ENCODE measurements at regions of chr12 and their contacts with region 1.

Region 1: DNA sequence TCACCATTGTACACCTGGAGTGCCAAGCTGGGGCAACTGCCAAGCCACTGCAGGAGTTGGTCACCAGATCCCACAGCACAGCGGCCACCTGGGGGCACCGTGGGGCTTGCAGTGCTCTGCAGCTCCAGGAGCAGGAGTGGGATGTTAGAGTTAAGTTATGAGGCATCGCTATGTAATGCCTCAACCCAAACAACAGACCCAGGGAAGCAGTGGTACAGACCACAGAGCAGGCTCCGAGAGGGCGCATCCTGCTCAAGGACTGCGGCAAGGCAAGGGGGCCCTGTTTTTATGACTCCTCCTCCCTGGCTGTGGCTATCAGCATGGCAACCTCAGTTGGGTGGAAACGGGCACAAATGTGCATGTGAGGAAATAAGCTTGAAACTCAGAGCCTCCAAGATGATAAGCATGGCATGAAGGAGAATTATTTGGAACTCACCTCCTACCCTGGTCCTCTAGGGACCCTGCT is 63.1 kb downstream of the ARL6IP4 start:
- DNase-seq: peak; percentile 27 to 68
- H3K4me3 ChIP-seq: no peak overlapping the region
- H3K27ac ChIP-seq: no peak overlapping the region
- H3K4me1 ChIP-seq: no peaks in the 10 kb centered on the region; a peak in 1 of 7 replicates
- H3K27me3 ChIP-seq: no peaks in the 10 kb centered on the region; a peak in 1 of 7 replicates
- CTCF ChIP-seq: peak; percentile 66 to 77 (median 68)
- EP300 ChIP-seq: no peak
- POLR2A ChIP-seq: no peak
- RAD21 ChIP-seq: peak; percentile 82 to 89

Region 2: DNA sequence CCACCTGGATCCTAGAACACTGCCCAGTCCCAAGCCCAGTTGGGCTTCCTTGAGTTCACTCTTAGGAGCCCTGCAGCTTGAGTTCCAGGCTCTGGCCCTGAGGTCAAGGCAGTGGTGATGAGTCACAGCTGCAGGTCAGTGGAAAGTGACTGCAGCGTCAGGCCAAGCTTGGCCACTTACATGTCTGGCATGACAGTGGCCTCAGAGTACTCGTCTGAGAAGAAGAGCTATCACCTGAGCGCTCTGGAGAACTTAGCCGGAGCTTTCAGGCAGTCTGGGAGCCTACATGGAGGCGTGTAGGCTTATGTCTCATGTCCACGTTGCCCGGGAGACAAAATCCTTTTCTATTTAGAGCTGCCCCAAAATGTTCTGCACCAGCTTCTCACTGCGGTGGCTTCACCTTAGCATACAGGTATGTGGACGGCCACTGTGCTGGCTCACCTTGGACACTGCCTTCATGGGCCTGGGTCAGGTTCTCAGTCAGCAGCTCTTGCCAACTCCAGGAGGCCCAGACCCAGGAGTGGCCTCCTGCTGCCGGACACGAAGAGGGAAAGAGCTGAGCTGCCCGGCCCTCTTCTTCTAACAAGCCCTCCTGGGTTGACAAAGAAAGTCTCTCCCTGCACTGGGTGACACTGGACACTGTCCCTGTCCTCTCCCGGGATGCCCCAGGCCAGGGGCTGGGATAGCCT is 12.6 kb after region 1 on chr12:
- CTCF ChIA-PET with region 1: interaction called, 63 read pairs
- POLR2A ChIA-PET with region 1: interaction called, 3 read pairs
- DNase-seq: no peak
- H3K4me3 ChIP-seq: no peak overlapping the region
- H3K27ac ChIP-seq: no peak overlapping the region
- H3K4me1 ChIP-seq: no peaks in the 10 kb centered on the region
- H3K27me3 ChIP-seq: no peaks in the 10 kb centered on the region; a peak in 1 of 7 replicates
- CTCF ChIP-seq: no peak
- EP300 ChIP-seq: no peak
- POLR2A ChIP-seq: no peak
- RAD21 ChIP-seq: no peak

Region 3: GRCh38 chr12:123062681-123063486 is 19.3 kb after region 1 on chr12:
- CTCF ChIA-PET with region 1: interaction called, 63 read pairs
- POLR2A ChIA-PET with region 1: interaction called, 3 read pairs
- DNase-seq: no peak
- H3K4me3 ChIP-seq: no peak overlapping the region
- H3K27ac ChIP-seq: no peak overlapping the region
- H3K4me1 ChIP-seq: no peaks in the 10 kb centered on the region
- H3K27me3 ChIP-seq: no peaks in the 10 kb centered on the region
- CTCF ChIP-seq: no peak
- EP300 ChIP-seq: no peak
- POLR2A ChIP-seq: no peak
- RAD21 ChIP-seq: no peak

Region 4: DNA sequence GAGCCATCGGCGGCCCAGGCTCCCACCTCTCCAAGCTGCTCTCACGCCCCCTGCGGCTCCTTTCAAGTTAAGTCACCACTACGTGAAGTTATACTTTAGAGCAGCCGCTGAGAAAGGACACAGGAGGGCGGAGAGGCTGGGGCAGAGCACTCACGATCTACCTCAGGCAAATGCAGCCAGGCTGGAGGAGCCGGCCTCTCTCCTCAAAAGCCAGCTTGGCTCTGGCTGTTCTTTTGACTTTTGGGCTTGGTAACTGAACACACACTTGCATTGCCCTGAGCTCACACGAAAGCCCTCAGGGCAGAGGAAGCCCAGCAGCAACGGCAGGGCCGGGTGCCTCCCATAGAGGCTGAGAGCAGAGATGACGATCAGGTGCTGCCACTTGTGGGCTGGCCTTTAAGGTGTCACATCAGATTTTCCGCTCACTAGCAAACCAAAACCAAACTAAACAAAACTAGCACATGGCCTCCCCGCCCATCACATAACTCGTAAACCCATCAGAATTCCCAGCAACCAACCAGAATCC is 32.1 kb after region 1 on chr12:
- CTCF ChIA-PET with region 1: interaction called, 25 read pairs
- POLR2A ChIA-PET with region 1: interaction called, 3 read pairs
- DNase-seq: peak; percentile 33 to 63
- H3K4me3 ChIP-seq: no peak overlapping the region
- H3K27ac ChIP-seq: no peak overlapping the region
- H3K4me1 ChIP-seq: peaks cover 0 to 9% (median 3%) of the 10 kb centered on the region in 4 experiments; a peak in 5 of 7 replicates
- H3K27me3 ChIP-seq: peaks cover 0 to 3% (median 0%) of the 10 kb centered on the region in 4 experiments; a peak in 1 of 7 replicates
- CTCF ChIP-seq: no peak
- EP300 ChIP-seq: no peak
- POLR2A ChIP-seq: no peak
- RAD21 ChIP-seq: peak in 1 of 2 experiments; percentile 20; a peak in 1 of 4 replicates

Region 5: GRCh38 chr12:123150744-123151456 is 107.3 kb after region 1 on chr12 and contains the start of gene PITPNM2:
- CTCF ChIA-PET with region 1: interaction called, 16 read pairs
- POLR2A ChIA-PET with region 1: no interaction called
- DNase-seq: no peak
- H3K4me3 ChIP-seq: peak within 1 kb of the TSS; percentile 51 to 86 (median 74)
- H3K27ac ChIP-seq: no peak within 1 kb of the TSS
- H3K4me1 ChIP-seq: peaks cover 6 to 26% (median 9%) of the 10 kb centered on the region in 4 experiments
- H3K27me3 ChIP-seq: peaks cover 14 to 39% (median 32%) of the 10 kb centered on the region in 4 experiments; a peak in 6 of 7 replicates
- CTCF ChIP-seq: peak in 2 of 3 experiments; percentile 26 to 31; a peak in 2 of 4 replicates
- EP300 ChIP-seq: no peak
- POLR2A ChIP-seq: no peak
- RAD21 ChIP-seq: 0 out of 4 replicates have a peak, but pooled peaks of 1 of the 2 experiments have one; percentile 11
- total RNA-seq, gene PITPNM2: 2.3 and 3.4 TPM in 2 replicates

Measured in H1 (cell line).